Stomach (tissue), 19 donors: ENCODE measurements at regions of chr18 and their contacts with region 1.

Region 1: GRCh38 chr18:13112982-13113381 is 105.6 kb upstream of the LDLRAD4 start:
- DNase-seq: peak; percentile 55 to 82
- H3K4me3 ChIP-seq: no peak overlapping the region
- H3K27ac ChIP-seq: no peak overlapping the region
- H3K4me1 ChIP-seq: no peaks in the 10 kb centered on the region
- H3K27me3 ChIP-seq: no peaks in the 10 kb centered on the region
- CTCF ChIP-seq: peak in 4 of 7 experiments; percentile 7 to 37 (median 28)
- EP300 ChIP-seq: no peak
- POLR2A ChIP-seq: no peak

Region 2: DNA sequence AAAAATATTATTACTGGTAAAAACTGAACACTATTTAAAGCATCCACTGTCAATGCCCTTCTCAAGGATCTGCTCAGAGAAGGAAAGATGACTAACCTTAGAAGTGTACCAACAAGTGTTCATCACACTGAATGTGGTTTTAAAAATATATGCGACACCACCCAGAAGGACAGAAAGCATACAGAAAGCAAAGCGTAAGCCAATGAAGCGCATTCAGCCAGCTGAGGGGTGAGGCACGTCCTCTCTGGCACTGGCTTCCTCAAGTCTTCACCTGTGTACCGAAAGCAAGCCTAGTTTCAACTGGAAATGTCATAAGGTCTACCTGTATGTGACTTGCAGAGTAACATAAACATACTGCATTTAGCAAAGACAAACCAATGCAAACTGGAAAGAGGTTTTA is 321.4 kb before region 1 on chr18:
- intact Hi-C with region 1: no loop called
- DNase-seq: no peak
- H3K4me3 ChIP-seq: no peak overlapping the region
- H3K27ac ChIP-seq: no peak overlapping the region
- H3K4me1 ChIP-seq: no peaks in the 10 kb centered on the region
- H3K27me3 ChIP-seq: no peaks in the 10 kb centered on the region
- CTCF ChIP-seq: no peak
- EP300 ChIP-seq: no peak
- POLR2A ChIP-seq: no peak

Region 3: GRCh38 chr18:13166023-13166422 is 53.0 kb after region 1 on chr18:
- intact Hi-C with region 1: loop called (anchors 10 kb)
- DNase-seq: no peak
- H3K4me3 ChIP-seq: no peak overlapping the region
- H3K27ac ChIP-seq: no peak overlapping the region
- H3K4me1 ChIP-seq: no peaks in the 10 kb centered on the region
- H3K27me3 ChIP-seq: peaks cover 0 to 6% (median 0%) of the 10 kb centered on the region in 3 donors
- CTCF ChIP-seq: no peak
- EP300 ChIP-seq: no peak
- POLR2A ChIP-seq: no peak